ENCODE measurements at regions of chr3 and their contacts with region 1.

Region 1: GRCh38 chr3:47802734-47803477 is at the start of gene DHX30:
- DNase-seq: peak; percentile 94 to 98 (median 96)
- ATAC-seq: peak; percentile 97
- H3K4me3 ChIP-seq: peak within 1 kb of the TSS; percentile 98
- H3K27ac ChIP-seq: peak within 1 kb of the TSS; percentile 86
- H3K4me1 ChIP-seq: peaks cover 9 to 12% of the 10 kb centered on the region in 2 experiments; a peak in 4 of 5 replicates
- H3K27me3 ChIP-seq: no peaks in the 10 kb centered on the region
- CTCF ChIP-seq: no peak
- EP300 ChIP-seq: no peak
- POLR2A ChIP-seq: peak; percentile 75
- RAD21 ChIP-seq: no peak
- polyA plus RNA-seq, gene DHX30: 12.3 to 14.2 TPM

Region 2: DNA sequence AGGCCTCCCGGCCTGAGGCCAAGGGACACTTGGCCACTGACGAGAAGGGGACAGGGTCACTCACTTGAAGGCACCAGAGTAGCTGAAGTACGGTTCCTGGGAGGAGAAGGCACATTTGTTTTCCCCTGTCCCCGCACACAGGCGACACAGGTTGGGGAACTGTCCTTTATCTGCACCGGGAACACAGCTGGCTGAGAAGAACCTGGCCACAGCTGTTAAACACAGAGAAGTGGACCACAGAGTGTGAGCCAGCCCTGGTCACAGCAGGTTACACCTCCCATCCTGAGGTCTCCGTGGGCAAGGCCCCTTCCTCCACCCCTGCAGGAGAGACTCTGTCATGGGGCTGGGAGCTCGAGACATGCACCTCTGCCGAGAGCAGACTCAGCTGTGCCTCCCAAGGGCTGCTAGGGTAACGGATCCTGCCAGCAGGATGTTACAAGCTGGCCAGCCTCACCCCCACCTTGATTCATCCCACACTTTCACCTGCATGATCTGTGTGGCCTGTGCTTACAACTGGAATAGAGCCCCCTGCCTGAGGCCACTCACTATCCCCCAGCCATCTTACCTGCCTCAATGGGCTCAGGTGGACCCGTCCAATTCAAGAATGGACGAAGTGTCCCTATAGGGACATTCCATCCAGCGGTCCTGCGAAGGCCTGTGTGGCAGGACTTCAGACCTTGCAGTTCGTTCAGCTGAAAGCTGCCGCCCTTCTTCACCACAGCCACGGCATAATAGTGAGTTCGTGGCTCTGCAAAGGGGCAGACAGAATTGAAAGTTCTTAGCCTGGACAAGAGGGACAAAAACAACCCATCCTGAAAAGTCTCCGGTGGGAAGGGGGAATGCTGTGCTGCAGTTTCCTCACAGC is 1347.4 kb before region 1 on chr3:
- CTCF ChIA-PET with region 1: no interaction called
- POLR2A ChIA-PET with region 1: no interaction called
- in situ Hi-C with region 1: no loop called
- intact Hi-C with region 1: no loop called
- DNase-seq: no peak
- ATAC-seq: peak; percentile 63
- H3K4me3 ChIP-seq: no peak overlapping the region
- H3K27ac ChIP-seq: no peak overlapping the region
- H3K4me1 ChIP-seq: no peaks in the 10 kb centered on the region
- H3K27me3 ChIP-seq: peaks cover 51 to 72% of the 10 kb centered on the region in 2 experiments
- CTCF ChIP-seq: no peak
- EP300 ChIP-seq: no peak
- POLR2A ChIP-seq: no peak
- RAD21 ChIP-seq: no peak

Region 3: GRCh38 chr3:47813551-47814177 is 10.8 kb after region 1 on chr3:
- CTCF ChIA-PET with region 1: no interaction called
- POLR2A ChIA-PET with region 1: interaction called, 10 read pairs
- in situ Hi-C with region 1: no loop called
- intact Hi-C with region 1: no loop called
- DNase-seq: no peak
- ATAC-seq: peak; percentile 24; the same call in 1 of the 3 replicates
- H3K4me3 ChIP-seq: no peak overlapping the region
- H3K27ac ChIP-seq: no peak overlapping the region
- H3K4me1 ChIP-seq: no peaks in the 10 kb centered on the region
- H3K27me3 ChIP-seq: no peaks in the 10 kb centered on the region
- CTCF ChIP-seq: no peak
- EP300 ChIP-seq: no peak
- POLR2A ChIP-seq: no peak
- RAD21 ChIP-seq: no peak